Ovary (tissue), 10 donors: ENCODE measurements at regions of chr17 and their contacts with region 1.

Region 1: DNA sequence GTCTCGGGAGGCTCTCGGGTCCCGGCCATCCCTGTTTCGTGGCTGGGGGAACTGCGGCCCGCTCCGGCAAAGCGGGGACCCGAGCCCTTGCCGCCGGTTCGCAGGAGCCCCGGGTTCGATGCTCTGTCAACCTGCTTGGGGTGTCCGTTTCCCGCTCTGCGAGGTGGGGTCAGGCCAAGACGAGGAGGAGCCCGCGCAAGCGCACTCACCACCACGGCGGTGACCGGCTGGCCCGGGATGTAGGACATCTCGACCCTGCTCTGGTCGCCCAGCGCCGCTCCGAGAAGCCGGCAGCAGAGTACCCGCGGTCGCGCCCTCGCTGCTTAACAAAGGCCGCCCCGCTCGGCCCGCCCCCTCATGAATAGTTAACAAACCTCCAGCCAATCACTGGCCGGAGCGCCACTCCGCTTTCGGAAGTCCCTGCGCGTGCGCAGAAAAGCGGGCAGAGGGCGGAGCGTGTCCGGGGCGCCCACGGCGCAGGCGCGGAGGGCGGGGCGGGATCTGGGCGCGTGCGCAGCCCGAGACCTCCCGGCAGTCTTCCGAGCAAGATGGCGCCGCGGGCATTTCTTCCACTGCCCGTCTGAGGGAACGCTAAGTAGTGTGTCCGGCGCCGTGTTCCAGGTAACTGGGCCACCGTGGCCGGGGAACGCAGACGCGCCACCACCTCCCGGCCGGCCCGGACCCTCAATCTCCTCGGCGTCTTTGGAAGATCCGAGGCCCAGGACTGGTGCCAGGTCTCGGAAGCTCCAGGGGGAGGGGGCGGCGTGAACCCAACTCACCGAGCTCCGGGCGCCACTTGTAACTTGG is at the starts of genes EMC6 and TAX1BP3:
- DNase-seq: peak; percentile 99
- H3K4me3 ChIP-seq: peak within 1 kb of the TSS; percentile 88
- H3K27ac ChIP-seq: peak within 1 kb of the TSS; percentile 89 to 93
- H3K4me1 ChIP-seq: peaks cover 19% of the 10 kb centered on the region
- H3K27me3 ChIP-seq: no peaks in the 10 kb centered on the region
- CTCF ChIP-seq: no peak
- EP300 ChIP-seq: no peak
- POLR2A ChIP-seq: peak; percentile 75
- total RNA-seq, gene EMC6: 7.6 to 28.7 (median 20.5) TPM
- total RNA-seq, gene TAX1BP3: 64.3 to 166 (median 128) TPM

Region 2: DNA sequence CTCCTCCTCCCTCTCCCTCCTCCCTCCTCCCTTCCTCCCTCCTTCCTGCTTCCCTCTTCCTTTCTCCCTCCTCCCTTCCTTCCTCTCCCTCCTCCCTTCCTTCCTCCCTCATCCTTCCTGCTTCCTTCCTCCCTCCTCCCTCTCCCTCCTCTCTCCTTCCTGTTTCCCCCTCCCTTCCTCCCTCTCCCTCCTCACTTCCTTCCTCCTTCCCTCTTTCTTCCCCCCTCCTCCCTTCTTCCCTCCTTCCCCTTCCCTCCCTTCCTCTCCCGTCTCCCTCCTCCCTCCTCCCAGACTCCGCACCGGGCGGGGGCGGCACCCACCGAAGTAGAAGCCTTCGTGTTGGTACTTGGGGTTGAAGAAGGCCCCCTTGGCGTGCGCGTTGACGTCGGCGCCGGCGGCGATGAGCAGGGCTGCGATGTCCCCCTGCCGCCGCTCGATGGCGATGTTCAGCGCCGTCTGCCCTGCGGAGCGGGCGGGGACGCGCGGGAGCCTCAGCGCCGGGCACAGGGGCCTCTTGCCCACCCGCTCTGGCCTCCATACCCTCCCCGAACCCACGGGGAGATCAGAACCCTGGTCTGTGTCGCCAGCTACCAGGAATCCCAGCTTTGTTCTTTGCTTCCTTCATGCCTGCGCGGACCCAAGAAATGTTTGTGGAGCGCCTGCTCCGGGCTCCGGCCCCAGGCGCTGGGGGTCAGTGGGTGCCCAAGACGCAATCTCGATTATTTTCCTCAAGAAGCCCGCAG is 133.1 kb before region 1 on chr17:
- intact Hi-C with region 1: loop called in 1 of 4 experiments (anchors 10 kb)
- DNase-seq: peak; percentile 68 to 90 (median 81)
- H3K4me3 ChIP-seq: peak overlapping the region; percentile 33
- H3K27ac ChIP-seq: peak overlapping the region in 1 of 2 donors; percentile 49
- H3K4me1 ChIP-seq: peaks cover 14% of the 10 kb centered on the region
- H3K27me3 ChIP-seq: no peaks in the 10 kb centered on the region
- CTCF ChIP-seq: peak; percentile 55 to 76 (median 65)
- EP300 ChIP-seq: no peak
- POLR2A ChIP-seq: no peak